ENCODE measurements at regions of chr1 and their contacts with region 1.

Region 1: DNA sequence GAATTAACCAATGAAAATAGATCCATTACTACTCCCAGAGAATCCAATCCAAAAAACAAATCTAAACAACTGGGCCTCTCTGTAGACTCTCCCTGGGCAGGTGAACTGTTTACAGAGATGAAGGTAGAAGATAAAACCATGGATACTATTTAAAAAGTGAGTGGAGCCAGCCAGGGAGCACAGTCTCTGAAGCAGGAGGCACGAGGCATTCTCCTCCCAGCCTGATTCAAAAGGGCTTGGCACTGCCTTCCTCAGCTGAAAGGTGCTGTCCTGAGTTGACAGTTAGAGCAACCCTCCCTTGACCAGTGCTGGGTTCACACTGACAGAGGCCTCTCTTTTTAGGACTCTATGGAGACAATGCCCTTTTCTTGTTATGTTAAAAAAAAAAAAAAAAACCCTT is 36.8 kb downstream of the HENMT1 start:
- DNase-seq: no peak
- ATAC-seq: no peak
- H3K4me3 ChIP-seq: no peak overlapping the region
- H3K4me3 Mint-ChIP-seq: no peak overlapping the region
- H3K27ac ChIP-seq: no peak overlapping the region
- H3K27ac Mint-ChIP-seq: no peak overlapping the region
- H3K4me1 ChIP-seq: no peaks in the 10 kb centered on the region
- H3K4me1 Mint-ChIP-seq: no peaks in the 10 kb centered on the region
- H3K27me3 ChIP-seq: no peaks in the 10 kb centered on the region
- H3K27me3 Mint-ChIP-seq: no peaks in the 10 kb centered on the region
- CTCF ChIP-seq: no peak

Region 2: GRCh38 chr1:108503076-108503740 is 120.8 kb before region 1 on chr1:
- CTCF ChIA-PET with region 1: no interaction called
- POLR2A ChIA-PET with region 1: no interaction called
- intact Hi-C with region 1: loop called in 1 of 2 experiments (anchors 5 kb)
- DNase-seq: no peak
- ATAC-seq: no peak
- H3K4me3 ChIP-seq: no peak overlapping the region
- H3K4me3 Mint-ChIP-seq: no peak overlapping the region
- H3K27ac ChIP-seq: no peak overlapping the region
- H3K27ac Mint-ChIP-seq: no peak overlapping the region
- H3K4me1 ChIP-seq: peaks cover 14% of the 10 kb centered on the region
- H3K4me1 Mint-ChIP-seq: no peaks in the 10 kb centered on the region
- H3K27me3 ChIP-seq: peaks cover 0 to 6% of the 10 kb centered on the region in 2 experiments
- H3K27me3 Mint-ChIP-seq: peaks cover 36% of the 10 kb centered on the region
- CTCF ChIP-seq: no peak

Region 3: DNA sequence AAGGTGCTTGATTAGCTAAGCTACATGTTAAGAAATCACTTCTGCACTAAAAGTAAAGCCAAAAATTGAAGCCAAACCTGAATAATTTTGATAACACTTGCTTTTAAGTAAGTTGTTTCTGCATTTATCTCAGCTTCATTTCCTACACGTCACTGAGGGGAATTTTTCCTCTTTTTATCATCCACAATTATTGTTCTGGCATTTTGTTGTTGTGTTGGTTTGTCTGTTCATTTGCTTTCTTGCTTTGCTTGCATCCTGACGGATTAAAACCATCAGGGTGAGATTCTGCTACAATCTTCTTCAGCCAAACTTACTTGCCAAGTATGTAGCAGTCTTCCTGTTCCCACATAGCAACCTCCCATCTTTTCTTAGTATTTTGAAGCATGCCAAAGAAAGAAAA is 82.2 kb before region 1 on chr1:
- CTCF ChIA-PET with region 1: no interaction called
- POLR2A ChIA-PET with region 1: no interaction called
- intact Hi-C with region 1: no loop called
- DNase-seq: no peak
- ATAC-seq: no peak
- H3K4me3 ChIP-seq: no peak overlapping the region
- H3K4me3 Mint-ChIP-seq: no peak overlapping the region
- H3K27ac ChIP-seq: no peak overlapping the region
- H3K27ac Mint-ChIP-seq: no peak overlapping the region
- H3K4me1 ChIP-seq: no peaks in the 10 kb centered on the region
- H3K4me1 Mint-ChIP-seq: no peaks in the 10 kb centered on the region
- H3K27me3 ChIP-seq: peaks cover 0 to 3% of the 10 kb centered on the region in 2 experiments
- H3K27me3 Mint-ChIP-seq: peaks cover 29% of the 10 kb centered on the region
- CTCF ChIP-seq: no peak